Activated naive CD4-positive, alpha-beta T cell treated with anti-CD3 and anti-CD28 coated beads for 36 hours (primary cell): ENCODE measurements at regions of chr14 and their contacts with region 1.

Region 1: DNA sequence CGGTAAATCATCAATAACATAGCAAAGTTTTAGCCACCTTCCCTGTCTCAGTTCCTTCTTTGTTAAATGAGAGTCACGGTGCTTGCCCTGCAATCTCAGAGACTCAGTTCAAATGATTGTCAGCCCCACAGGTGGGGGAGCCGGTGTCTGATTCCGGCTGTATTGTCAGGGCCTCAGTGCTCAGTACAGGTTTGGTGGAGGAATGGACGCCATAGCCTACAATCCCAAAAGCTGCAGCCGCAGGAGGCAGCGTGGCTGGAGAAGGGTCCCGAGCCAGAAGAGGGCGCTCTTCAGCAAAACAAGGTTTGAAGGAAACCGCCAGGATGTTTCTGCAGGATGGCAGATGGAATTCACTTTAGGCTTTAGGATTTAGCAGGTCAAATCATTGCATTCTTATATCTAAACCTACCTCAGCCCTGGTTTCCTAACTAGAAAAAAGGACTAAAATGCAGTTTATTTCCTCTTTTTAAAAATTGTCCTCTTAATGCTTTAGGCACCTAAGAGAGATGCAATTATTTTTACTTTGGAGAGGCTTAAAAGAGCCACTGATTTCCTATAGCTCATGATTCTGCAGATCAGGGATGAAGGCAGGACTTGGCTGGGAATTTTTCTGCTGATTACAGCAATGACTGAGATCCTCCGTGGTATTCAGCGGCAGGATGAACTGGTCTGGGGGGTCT is 29.2 kb downstream of the FOS start:
- DNase-seq: peak; percentile 88
- H3K4me3 Mint-ChIP-seq: no peak overlapping the region
- H3K27ac Mint-ChIP-seq: no peak overlapping the region
- H3K4me1 Mint-ChIP-seq: peaks cover 11% of the 10 kb centered on the region
- H3K27me3 Mint-ChIP-seq: no peaks in the 10 kb centered on the region

Region 2: DNA sequence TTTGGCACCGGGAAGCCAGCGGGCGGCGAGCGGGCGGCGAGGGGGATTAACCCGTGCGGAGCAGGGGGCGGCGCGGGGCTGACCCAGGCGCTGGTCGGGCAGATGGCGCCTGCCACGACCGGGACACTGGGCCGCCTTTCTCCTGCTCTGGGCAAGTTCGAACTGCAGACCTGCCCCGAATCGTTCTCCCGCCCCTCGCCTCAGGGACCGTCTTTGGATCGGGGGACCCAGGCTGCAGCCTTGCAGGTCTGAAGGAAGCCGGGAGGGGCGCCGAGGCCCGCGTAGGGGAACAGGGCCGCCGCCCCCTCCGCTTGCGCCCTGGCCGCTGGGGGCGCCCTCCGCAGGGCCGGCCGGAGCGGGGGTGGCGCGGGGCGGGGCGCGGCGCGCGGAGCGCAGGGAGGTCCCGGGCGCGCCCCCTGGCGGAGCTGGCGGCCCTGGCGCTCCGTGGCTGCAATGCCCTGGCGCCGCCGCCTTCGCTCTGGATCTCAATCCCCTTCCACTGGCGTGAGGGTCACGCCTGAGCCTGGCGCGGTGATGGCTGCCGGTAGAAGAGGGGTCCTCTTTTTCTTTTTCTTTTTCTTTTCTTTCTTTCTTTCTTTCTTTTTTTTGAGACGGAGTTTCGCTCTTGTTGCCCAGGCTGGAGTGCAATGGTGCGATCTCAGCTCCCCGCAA is 695.4 kb before region 1 on chr14:
- CTCF ChIA-PET with region 1: no interaction called
- intact Hi-C with region 1: loop called (anchors 2 kb)
- DNase-seq: peak; percentile 77
- H3K4me3 Mint-ChIP-seq: peak overlapping the region; percentile 62
- H3K27ac Mint-ChIP-seq: no peak overlapping the region
- H3K4me1 Mint-ChIP-seq: peaks cover 40% of the 10 kb centered on the region
- H3K27me3 Mint-ChIP-seq: peaks cover 14% of the 10 kb centered on the region

Region 3: GRCh38 chr14:74945823-74946682 is 361.8 kb before region 1 on chr14:
- CTCF ChIA-PET with region 1: no interaction called
- intact Hi-C with region 1: loop called (anchors 1 kb)
- DNase-seq: peak; percentile 87
- H3K4me3 Mint-ChIP-seq: peak overlapping the region; percentile 50
- H3K27ac Mint-ChIP-seq: peak overlapping the region; percentile 62
- H3K4me1 Mint-ChIP-seq: peaks cover 26% of the 10 kb centered on the region
- H3K27me3 Mint-ChIP-seq: peaks cover under 1% of the 10 kb centered on the region

Region 4: DNA sequence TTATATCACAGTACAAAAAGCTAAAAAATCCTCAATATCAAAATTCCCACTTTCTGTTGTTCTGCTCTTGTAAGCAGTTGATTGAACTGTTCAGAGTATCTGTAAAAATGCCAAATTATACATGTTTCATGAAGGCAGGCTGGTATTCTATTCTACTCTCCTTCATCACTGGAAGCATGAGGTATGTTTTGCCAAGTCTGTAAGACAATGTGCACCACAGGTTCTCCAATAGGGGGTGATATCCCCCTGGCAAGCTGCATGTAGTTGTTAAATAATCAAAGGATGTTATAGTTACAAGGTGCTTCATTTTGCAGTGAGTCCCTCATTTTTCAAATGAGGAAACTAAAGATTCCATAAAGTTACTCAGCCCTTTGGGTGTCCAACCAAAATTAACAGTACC is 165.9 kb before region 1 on chr14:
- CTCF ChIA-PET with region 1: interaction called, 38 read pairs
- intact Hi-C with region 1: no loop called
- DNase-seq: peak; percentile 51
- H3K4me3 Mint-ChIP-seq: no peak overlapping the region
- H3K27ac Mint-ChIP-seq: no peak overlapping the region
- H3K4me1 Mint-ChIP-seq: peaks cover 62% of the 10 kb centered on the region
- H3K27me3 Mint-ChIP-seq: no peaks in the 10 kb centered on the region

Region 5: DNA sequence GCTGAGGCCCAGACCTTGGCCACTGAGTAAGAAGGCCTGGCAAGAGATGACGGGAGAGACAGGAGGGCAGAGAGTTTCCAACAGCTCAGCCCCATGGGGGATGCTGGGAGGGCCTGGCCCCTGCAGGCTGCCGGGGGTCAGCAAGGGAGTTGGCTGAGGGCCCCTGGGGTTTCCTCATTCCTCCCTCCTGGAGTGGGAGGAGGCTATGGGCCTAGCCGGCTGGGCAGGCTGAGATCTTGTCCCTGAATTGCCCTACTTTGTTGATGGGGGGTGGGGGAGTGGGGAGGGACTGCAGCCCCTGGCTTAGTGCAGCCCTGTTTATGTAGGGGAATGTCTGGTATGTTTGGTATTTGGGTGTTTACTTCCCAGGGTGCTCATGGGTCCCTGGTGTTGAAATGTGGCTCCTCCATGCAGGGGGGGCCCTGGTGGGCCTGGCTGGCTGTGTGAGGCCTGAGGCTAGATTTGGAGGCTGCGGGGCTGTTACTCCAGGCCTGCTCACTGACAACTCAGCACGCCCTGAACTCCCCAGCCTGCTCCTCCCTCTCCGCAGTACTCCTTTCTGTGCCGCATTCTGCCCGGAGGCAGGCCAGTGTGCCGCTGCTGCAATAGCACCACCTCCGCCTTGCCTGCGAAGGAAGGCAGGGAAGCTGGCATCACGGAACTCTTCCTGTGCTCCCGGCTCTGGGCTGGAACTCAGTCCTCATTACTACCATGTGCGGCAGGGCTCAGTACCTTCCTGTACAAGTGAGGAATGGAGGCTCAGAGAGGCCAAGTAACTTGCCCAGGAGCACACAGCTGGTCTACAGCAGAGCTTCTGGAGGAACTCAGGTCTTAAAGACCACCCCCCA is 145.3 kb after region 1 on chr14:
- CTCF ChIA-PET with region 1: interaction called, 32 read pairs
- intact Hi-C with region 1: loop called (anchors 1 kb)
- DNase-seq: no peak
- H3K4me3 Mint-ChIP-seq: no peak overlapping the region
- H3K27ac Mint-ChIP-seq: no peak overlapping the region
- H3K4me1 Mint-ChIP-seq: peaks cover 2% of the 10 kb centered on the region
- H3K27me3 Mint-ChIP-seq: no peaks in the 10 kb centered on the region

Region 6: GRCh38 chr14:75566321-75566720 is 258.5 kb after region 1 on chr14:
- CTCF ChIA-PET with region 1: interaction called, 22 read pairs
- intact Hi-C with region 1: loop called (anchors 1 kb)
- DNase-seq: peak; percentile 96
- H3K4me3 Mint-ChIP-seq: peak overlapping the region; percentile 63
- H3K27ac Mint-ChIP-seq: peak overlapping the region; percentile 85
- H3K4me1 Mint-ChIP-seq: peaks cover 77% of the 10 kb centered on the region
- H3K27me3 Mint-ChIP-seq: no peaks in the 10 kb centered on the region